HepG2 (cell line): ENCODE measurements at regions of chr15 and their contacts with region 1.

Region 1: GRCh38 chr15:45402162-45402954 is 24.0 kb upstream of the GATM start:
- DNase-seq: peak; percentile 97
- ATAC-seq: peak; percentile 94
- H3K4me3 ChIP-seq: peak overlapping the region; percentile 92 to 99 (median 95)
- H3K27ac ChIP-seq: peak overlapping the region; percentile 88
- H3K4me1 ChIP-seq: peaks cover 58% of the 10 kb centered on the region
- H3K27me3 ChIP-seq: no peaks in the 10 kb centered on the region; a peak in 1 of 5 replicates
- CTCF ChIP-seq: no peak
- EP300 ChIP-seq: no peak
- POLR2A ChIP-seq: peak; percentile 68 to 94
- RAD21 ChIP-seq: no peak

Region 2: DNA sequence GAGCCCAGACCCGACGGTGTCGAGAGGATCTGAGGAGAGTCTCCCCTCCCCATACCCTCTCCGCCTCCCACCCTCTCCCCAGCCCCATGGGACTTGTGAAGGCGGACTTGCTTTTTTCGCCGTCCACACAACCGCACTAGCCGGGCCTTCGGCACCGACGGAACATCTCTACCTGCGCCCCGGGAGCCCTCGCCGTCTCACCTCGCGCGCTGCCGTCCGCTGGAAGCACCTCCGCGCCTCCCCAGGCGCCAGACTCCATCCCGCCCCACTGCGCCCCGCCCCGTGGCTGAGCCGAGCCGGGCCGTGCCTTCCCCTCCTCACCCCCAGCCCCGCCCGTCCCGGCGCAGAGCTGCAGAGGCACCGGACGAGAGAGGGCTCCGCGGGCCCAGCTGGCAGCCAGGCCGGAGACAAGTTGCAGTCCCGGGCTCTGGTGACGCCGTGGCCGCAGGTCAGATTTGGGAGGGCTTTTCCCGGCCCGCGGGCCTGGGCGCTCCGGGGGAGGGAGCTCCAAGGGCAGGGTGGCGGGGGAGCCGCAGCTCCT is 272.6 kb before region 1 on chr15 and contains the starts of genes DUOX1 and DUOXA1:
- CTCF ChIA-PET with region 1: no interaction called
- POLR2A ChIA-PET with region 1: no interaction called
- in situ Hi-C with region 1: no loop called
- intact Hi-C with region 1: no loop called
- DNase-seq: no peak
- ATAC-seq: no peak
- H3K4me3 ChIP-seq: no peak within 1 kb of the TSS
- H3K27ac ChIP-seq: no peak within 1 kb of the TSS
- H3K4me1 ChIP-seq: peaks cover 25% of the 10 kb centered on the region
- H3K27me3 ChIP-seq: peaks cover 2 to 18% of the 10 kb centered on the region in 2 experiments; a peak in 4 of 5 replicates
- CTCF ChIP-seq: no peak
- EP300 ChIP-seq: no peak
- POLR2A ChIP-seq: no peak
- RAD21 ChIP-seq: no peak
- total RNA-seq, gene DUOX1: not detected in 2 replicates
- total RNA-seq, gene DUOXA1: not detected in 2 replicates

Region 3: DNA sequence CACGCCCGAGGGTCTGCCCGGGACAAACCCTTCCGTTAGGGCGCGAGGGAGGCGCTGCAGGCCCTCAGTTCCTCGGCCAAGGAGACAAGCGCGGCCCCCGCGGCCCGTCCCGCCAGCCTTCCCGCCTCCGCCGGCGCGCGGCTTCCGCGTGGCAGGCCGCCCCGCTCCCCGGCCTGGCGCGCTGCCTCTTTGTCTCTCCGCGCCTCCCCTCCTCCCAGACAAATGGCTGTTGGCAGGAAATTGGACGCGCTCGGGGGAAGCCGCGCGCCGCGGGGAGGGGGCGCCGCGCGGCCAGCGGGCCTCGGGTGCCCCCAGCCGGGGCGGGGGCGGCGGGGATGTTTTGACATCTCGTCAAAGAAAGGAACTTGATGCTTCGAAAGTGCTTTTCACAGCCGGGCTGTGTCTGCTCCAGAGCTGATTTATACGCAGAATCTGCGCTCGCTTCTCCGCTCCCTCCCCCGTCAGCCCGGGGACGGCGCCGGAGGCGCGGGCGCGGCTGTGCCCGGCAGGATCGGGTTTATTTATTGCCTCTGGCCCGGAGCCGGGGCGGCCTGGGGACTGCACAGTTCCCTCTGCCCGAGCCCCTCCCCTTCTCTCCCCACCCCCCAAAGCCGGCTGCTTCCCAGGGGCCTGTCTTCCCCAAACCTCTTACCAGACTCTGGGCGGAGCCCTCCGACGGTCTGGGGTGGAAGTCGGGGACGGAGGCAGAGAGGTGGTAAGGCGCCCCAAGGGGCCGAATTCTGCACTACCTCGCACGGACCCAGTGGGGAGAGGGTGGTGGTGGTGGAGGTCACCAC is 235.3 kb before region 1 on chr15:
- CTCF ChIA-PET with region 1: no interaction called
- POLR2A ChIA-PET with region 1: interaction called, 5 read pairs
- in situ Hi-C with region 1: loop called (anchors 5 kb)
- intact Hi-C with region 1: loop called (anchors 5 kb)
- DNase-seq: peak; percentile 62
- ATAC-seq: peak; percentile 76
- H3K4me3 ChIP-seq: peak overlapping the region; percentile 69 to 76 (median 75)
- H3K27ac ChIP-seq: peak overlapping the region; percentile 76
- H3K4me1 ChIP-seq: peaks cover 41% of the 10 kb centered on the region
- H3K27me3 ChIP-seq: no peaks in the 10 kb centered on the region
- CTCF ChIP-seq: peak; percentile 68
- EP300 ChIP-seq: no peak
- POLR2A ChIP-seq: peak; percentile 30 to 34; a peak in 3 of 4 replicates
- RAD21 ChIP-seq: no peak

Region 4: GRCh38 chr15:45198337-45199135 is 203.8 kb before region 1 on chr15:
- CTCF ChIA-PET with region 1: no interaction called
- POLR2A ChIA-PET with region 1: interaction called, 25 read pairs
- in situ Hi-C with region 1: loop called (anchors 10 kb)
- intact Hi-C with region 1: no loop called
- DNase-seq: peak; percentile 92
- ATAC-seq: peak; percentile 58
- H3K4me3 ChIP-seq: peak overlapping the region; percentile 68 to 95 (median 88)
- H3K27ac ChIP-seq: peak overlapping the region; percentile 94
- H3K4me1 ChIP-seq: peaks cover 38% of the 10 kb centered on the region
- H3K27me3 ChIP-seq: peaks cover 0 to 4% of the 10 kb centered on the region in 2 experiments; a peak in 2 of 5 replicates
- CTCF ChIP-seq: peak; percentile 92
- EP300 ChIP-seq: peak in 1 of 2 experiments; percentile 23; a peak in 1 of 4 replicates
- POLR2A ChIP-seq: peak; percentile 59 to 68
- RAD21 ChIP-seq: no peak

Region 5: GRCh38 chr15:45279024-45279698 is 123.2 kb before region 1 on chr15:
- CTCF ChIA-PET with region 1: interaction called, 5 read pairs
- POLR2A ChIA-PET with region 1: interaction called, 3 read pairs
- in situ Hi-C with region 1: no loop called
- intact Hi-C with region 1: loop called (anchors 1 kb)
- DNase-seq: peak; percentile 97
- ATAC-seq: peak; percentile 100
- H3K4me3 ChIP-seq: peak overlapping the region; percentile 69 to 91 (median 85)
- H3K27ac ChIP-seq: peak overlapping the region; percentile 73
- H3K4me1 ChIP-seq: peaks cover 34% of the 10 kb centered on the region
- H3K27me3 ChIP-seq: no peaks in the 10 kb centered on the region
- CTCF ChIP-seq: 0 out of 2 replicates have a peak, but pooled peaks have one; percentile 8
- EP300 ChIP-seq: no peak
- POLR2A ChIP-seq: peak; percentile 81 to 86
- RAD21 ChIP-seq: no peak

Region 6: GRCh38 chr15:45333550-45333949 is 68.8 kb before region 1 on chr15:
- CTCF ChIA-PET with region 1: no interaction called
- POLR2A ChIA-PET with region 1: interaction called, 7 read pairs
- in situ Hi-C with region 1: no loop called
- intact Hi-C with region 1: loop called (anchors 2 kb)
- DNase-seq: peak; percentile 53
- ATAC-seq: peak; percentile 49; the same call in 2 of the 3 replicates
- H3K4me3 ChIP-seq: no peak overlapping the region
- H3K27ac ChIP-seq: peak overlapping the region; percentile 88
- H3K4me1 ChIP-seq: peaks cover 90% of the 10 kb centered on the region
- H3K27me3 ChIP-seq: no peaks in the 10 kb centered on the region
- CTCF ChIP-seq: no peak
- EP300 ChIP-seq: no peak
- POLR2A ChIP-seq: no peak
- RAD21 ChIP-seq: no peak

Region 7: GRCh38 chr15:45499426-45499825 is 97.1 kb after region 1 on chr15:
- CTCF ChIA-PET with region 1: no interaction called
- POLR2A ChIA-PET with region 1: no interaction called
- in situ Hi-C with region 1: no loop called
- intact Hi-C with region 1: no loop called
- DNase-seq: no peak
- ATAC-seq: no peak
- H3K4me3 ChIP-seq: no peak overlapping the region
- H3K27ac ChIP-seq: no peak overlapping the region
- H3K4me1 ChIP-seq: no peaks in the 10 kb centered on the region
- H3K27me3 ChIP-seq: no peaks in the 10 kb centered on the region
- CTCF ChIP-seq: no peak
- EP300 ChIP-seq: no peak
- POLR2A ChIP-seq: no peak
- RAD21 ChIP-seq: no peak

Region 8: GRCh38 chr15:45510758-45511280 is 108.5 kb after region 1 on chr15:
- CTCF ChIA-PET with region 1: no interaction called
- POLR2A ChIA-PET with region 1: no interaction called
- in situ Hi-C with region 1: no loop called
- intact Hi-C with region 1: no loop called
- DNase-seq: no peak
- ATAC-seq: no peak
- H3K4me3 ChIP-seq: no peak overlapping the region
- H3K27ac ChIP-seq: no peak overlapping the region
- H3K4me1 ChIP-seq: no peaks in the 10 kb centered on the region
- H3K27me3 ChIP-seq: no peaks in the 10 kb centered on the region
- CTCF ChIP-seq: no peak
- EP300 ChIP-seq: no peak
- POLR2A ChIP-seq: no peak
- RAD21 ChIP-seq: no peak

Region 9: GRCh38 chr15:45587095-45587860 is 184.9 kb after region 1 on chr15 and contains the start of gene BLOC1S6:
- CTCF ChIA-PET with region 1: no interaction called
- POLR2A ChIA-PET with region 1: interaction called, 27 read pairs
- in situ Hi-C with region 1: loop called (anchors 5 kb)
- intact Hi-C with region 1: loop called (anchors 1 kb)
- DNase-seq: peak; percentile 91
- ATAC-seq: peak; percentile 97
- H3K4me3 ChIP-seq: peak within 1 kb of the TSS; percentile 81 to 96 (median 82)
- H3K27ac ChIP-seq: peak within 1 kb of the TSS; percentile 97
- H3K4me1 ChIP-seq: peaks cover 33% of the 10 kb centered on the region
- H3K27me3 ChIP-seq: no peaks in the 10 kb centered on the region; a peak in 1 of 5 replicates
- CTCF ChIP-seq: no peak
- EP300 ChIP-seq: 0 out of 4 replicates have a peak, but pooled peaks have one; percentile 8 to 17
- POLR2A ChIP-seq: peak; percentile 79 to 81; a peak in 3 of 4 replicates
- RAD21 ChIP-seq: peak; percentile 29; the same call in 1 of the 2 replicates
- total RNA-seq, gene BLOC1S6: 44.3 and 67.5 TPM in 2 replicates